GM12878 (cell line): ENCODE measurements at regions of chr9 and their contacts with region 1.

Region 1: GRCh38 chr9:137406876-137407589 is 15.9 kb downstream of the EXD3 start:
- DNase-seq: no peak
- ATAC-seq: peak; percentile 86
- H3K4me3 ChIP-seq: peak overlapping the region; percentile 55; the same call in 1 of the 2 replicates
- H3K27ac ChIP-seq: peak overlapping the region; percentile 39; the same call in 1 of the 2 replicates
- H3K4me1 ChIP-seq: peaks cover 19% of the 10 kb centered on the region
- H3K27me3 ChIP-seq: no peaks in the 10 kb centered on the region
- CTCF ChIP-seq: peak; percentile 54 to 73 (median 71); a peak in 5 of 6 replicates
- EP300 ChIP-seq: no peak
- POLR2A ChIP-seq: no peak; the same call in 1 of the 2 replicates
- RAD21 ChIP-seq: peak; percentile 73

Region 2: GRCh38 chr9:137295238-137295811 is 111.7 kb before region 1 on chr9:
- CTCF ChIA-PET with region 1: interaction called, 3 read pairs
- POLR2A ChIA-PET with region 1: no interaction called
- RAD21 ChIA-PET with region 1: no interaction called
- SMC1A ChIA-PET with region 1: no interaction called
- in situ Hi-C with region 1: loop called (anchors 5 kb)
- intact Hi-C with region 1: no loop called
- DNase-seq: no peak
- ATAC-seq: peak; percentile 87
- H3K4me3 ChIP-seq: peak overlapping the region; percentile 36; the same call in 1 of the 2 replicates
- H3K27ac ChIP-seq: no peak overlapping the region
- H3K4me1 ChIP-seq: peaks cover 11% of the 10 kb centered on the region
- H3K27me3 ChIP-seq: no peaks in the 10 kb centered on the region; a peak in 1 of 4 replicates
- CTCF ChIP-seq: peak; percentile 50 to 69 (median 53); a peak in 5 of 6 replicates
- EP300 ChIP-seq: no peak
- POLR2A ChIP-seq: no peak
- RAD21 ChIP-seq: peak; percentile 60